ENCODE measurements at regions of chr19 and their contacts with region 1.

Region 1: DNA sequence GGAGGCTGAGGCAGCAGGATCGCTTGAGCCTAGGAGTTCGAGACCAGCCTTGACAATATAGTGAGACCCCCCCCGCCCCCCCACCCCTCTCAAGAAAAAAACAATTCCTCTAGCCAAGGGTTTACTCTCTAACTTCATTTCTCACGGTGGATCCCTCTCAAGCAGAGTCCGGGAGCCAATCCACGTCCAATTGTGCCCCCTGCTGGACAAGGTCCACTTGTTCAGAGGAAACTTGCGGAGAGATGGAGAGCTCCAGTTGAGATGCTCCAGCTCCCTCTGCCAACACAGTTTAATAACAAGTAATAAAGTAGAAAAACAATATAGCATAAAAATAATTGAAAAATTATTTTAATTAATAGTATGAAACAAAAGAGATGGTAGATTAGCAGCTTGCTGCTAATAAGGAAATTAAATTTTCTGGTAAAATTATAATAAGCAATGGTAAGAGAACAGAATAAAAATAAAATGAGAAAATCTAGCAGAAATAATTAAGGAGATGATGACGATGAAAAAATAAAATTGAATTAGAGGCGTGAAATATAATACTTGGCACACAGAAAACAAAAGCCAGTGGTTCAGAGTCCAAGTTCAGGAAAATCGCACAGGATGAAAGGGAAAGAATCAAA is 14.5 kb upstream of the SIGLEC14 start:
- DNase-seq: no peak
- ATAC-seq: no peak
- H3K4me3 ChIP-seq: no peak overlapping the region
- H3K27ac ChIP-seq: no peak overlapping the region
- H3K4me1 ChIP-seq: no peaks in the 10 kb centered on the region
- H3K27me3 ChIP-seq: peaks cover 0 to 7% (median 0%) of the 10 kb centered on the region in 3 donors
- CTCF ChIP-seq: peak in 3 of 5 experiments; percentile 14 to 44 (median 23)
- POLR2A ChIP-seq: no peak

Region 2: DNA sequence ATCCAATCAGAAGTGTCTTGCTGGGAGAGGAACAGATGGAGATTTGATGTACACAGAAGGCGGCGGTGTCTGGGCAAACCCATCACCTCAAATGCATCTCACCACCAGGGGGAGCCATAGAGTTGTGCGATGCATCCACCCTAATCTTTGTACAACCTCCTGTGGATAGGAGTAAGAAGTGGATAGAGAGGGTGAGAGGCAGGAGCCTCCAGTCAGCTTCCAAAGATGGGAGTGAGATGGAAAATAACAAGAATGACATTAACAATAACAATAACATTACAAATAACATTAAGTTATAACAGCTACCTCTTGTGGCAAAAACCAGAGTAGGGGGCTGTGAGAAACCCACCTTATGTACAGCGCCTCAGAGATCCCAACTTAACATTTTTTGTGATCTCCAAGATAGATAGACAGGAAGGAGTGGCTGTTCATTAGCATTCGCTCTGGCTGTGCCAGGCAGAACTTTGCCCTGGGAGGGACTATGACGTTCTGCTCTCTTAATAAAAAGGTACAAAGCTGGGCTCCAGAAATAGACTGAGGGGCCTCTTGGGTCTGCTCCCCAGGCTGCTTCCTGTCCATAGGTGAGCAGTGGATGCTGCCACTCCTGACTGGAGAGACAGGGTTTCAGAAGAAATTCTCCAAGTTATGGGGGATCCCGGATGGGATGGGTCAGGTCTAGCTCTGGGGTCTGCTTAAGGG is 187.9 kb before region 1 on chr19:
- in situ Hi-C with region 1: loop called in 3 of 4 experiments (anchors 10 to 25 kb)
- intact Hi-C with region 1: loop called (anchors 2 kb)
- DNase-seq: peak in 1 of 2 donors; percentile 27
- ATAC-seq: no peak
- H3K4me3 ChIP-seq: no peak overlapping the region
- H3K27ac ChIP-seq: no peak overlapping the region
- H3K4me1 ChIP-seq: no peaks in the 10 kb centered on the region
- H3K27me3 ChIP-seq: peaks cover 0 to 4% (median 0%) of the 10 kb centered on the region in 3 donors
- CTCF ChIP-seq: peak in 4 of 5 experiments; percentile 49 to 74 (median 60)
- POLR2A ChIP-seq: no peak

Region 3: GRCh38 chr19:51607920-51608562 is 53.0 kb before region 1 on chr19:
- in situ Hi-C with region 1: loop called in 1 of 4 experiments (anchors 10 kb)
- intact Hi-C with region 1: no loop called
- DNase-seq: peak; percentile 8 to 33
- ATAC-seq: no peak
- H3K4me3 ChIP-seq: no peak overlapping the region
- H3K27ac ChIP-seq: no peak overlapping the region
- H3K4me1 ChIP-seq: no peaks in the 10 kb centered on the region
- H3K27me3 ChIP-seq: peaks cover 0 to 6% (median 6%) of the 10 kb centered on the region in 3 donors
- CTCF ChIP-seq: no peak
- POLR2A ChIP-seq: no peak

Region 4: GRCh38 chr19:51777570-51778462 is 116.7 kb after region 1 on chr19:
- in situ Hi-C with region 1: no loop called
- intact Hi-C with region 1: loop called (anchors 10 kb)
- DNase-seq: peak; percentile 29 to 48
- ATAC-seq: no peak
- H3K4me3 ChIP-seq: no peak overlapping the region
- H3K27ac ChIP-seq: no peak overlapping the region
- H3K4me1 ChIP-seq: no peaks in the 10 kb centered on the region
- H3K27me3 ChIP-seq: no peaks in the 10 kb centered on the region
- CTCF ChIP-seq: peak in 4 of 5 experiments; percentile 31 to 58 (median 48)
- POLR2A ChIP-seq: no peak

Region 5: DNA sequence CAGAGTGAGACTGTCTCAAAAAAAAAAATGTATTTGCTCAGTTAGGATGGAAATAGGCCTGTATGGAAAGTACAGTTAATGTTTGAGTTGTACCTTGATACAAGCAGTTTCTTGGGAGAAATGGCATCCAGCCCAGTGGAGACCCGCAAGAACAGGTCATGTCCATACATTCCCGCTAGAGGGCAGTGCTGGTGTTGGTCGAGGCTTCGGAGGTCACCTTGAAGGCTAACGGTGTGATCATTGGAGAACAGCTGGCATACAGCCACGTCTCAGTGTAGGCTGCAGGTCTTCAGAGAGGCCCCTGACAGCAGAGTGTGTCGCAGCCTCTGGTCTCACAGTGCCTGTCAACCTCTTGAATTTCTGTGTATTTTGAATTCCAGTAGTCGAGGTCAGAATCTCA is 682.5 kb after region 1 on chr19:
- in situ Hi-C with region 1: no loop called
- intact Hi-C with region 1: no loop called
- DNase-seq: no peak
- ATAC-seq: no peak
- H3K4me3 ChIP-seq: no peak overlapping the region
- H3K27ac ChIP-seq: no peak overlapping the region
- H3K4me1 ChIP-seq: no peaks in the 10 kb centered on the region
- H3K27me3 ChIP-seq: no peaks in the 10 kb centered on the region
- CTCF ChIP-seq: peak in 2 of 5 experiments; percentile 30 to 41
- POLR2A ChIP-seq: no peak

Region 6: DNA sequence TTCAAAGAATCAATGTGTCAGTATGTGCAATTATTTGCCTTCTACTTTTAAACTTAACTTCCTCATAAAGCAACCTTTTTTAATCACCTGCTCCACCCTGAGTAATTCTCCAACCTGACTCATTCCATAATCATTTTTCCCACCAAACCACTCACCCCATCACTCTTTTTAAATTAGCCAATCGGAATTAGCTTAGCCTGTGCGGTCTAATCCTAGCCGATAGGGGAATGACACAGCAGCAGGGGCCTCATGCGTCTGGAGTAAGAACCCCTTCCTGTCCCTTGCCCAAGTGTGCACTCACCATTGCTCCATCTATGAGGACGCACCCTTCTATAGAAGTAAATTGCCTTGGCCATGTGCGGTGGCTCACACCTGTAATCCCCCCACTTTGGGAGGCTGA is 1004.4 kb after region 1 on chr19:
- in situ Hi-C with region 1: no loop called
- intact Hi-C with region 1: no loop called
- DNase-seq: no peak
- ATAC-seq: no peak
- H3K4me3 ChIP-seq: no peak overlapping the region
- H3K27ac ChIP-seq: no peak overlapping the region
- H3K4me1 ChIP-seq: no peaks in the 10 kb centered on the region
- H3K27me3 ChIP-seq: no peaks in the 10 kb centered on the region
- CTCF ChIP-seq: no peak
- POLR2A ChIP-seq: no peak